ENCODE measurements at regions of chr17 and their contacts with region 1.

Region 1: GRCh38 chr17:28763804-28764266 is 20.0 kb downstream of the TRAF4 start:
- DNase-seq: peak in 1 of 2 experiments; percentile 84
- H3K4me3 ChIP-seq: no peak overlapping the region
- H3K27ac ChIP-seq: no peak overlapping the region
- H3K4me1 ChIP-seq: peaks cover 9 to 25% (median 18%) of the 10 kb centered on the region in 4 experiments
- H3K27me3 ChIP-seq: no peaks in the 10 kb centered on the region
- CTCF ChIP-seq: peak in 2 of 3 experiments; percentile 62 to 81; a peak in 3 of 4 replicates
- EP300 ChIP-seq: no peak
- POLR2A ChIP-seq: no peak
- RAD21 ChIP-seq: peak; percentile 63 to 72

Region 2: GRCh38 chr17:28726226-28727130 is 37.4 kb before region 1 on chr17 and contains the start of gene TLCD1:
- CTCF ChIA-PET with region 1: interaction called, 83 read pairs
- POLR2A ChIA-PET with region 1: interaction called, 62 read pairs
- DNase-seq: peak; percentile 93 to 98
- H3K4me3 ChIP-seq: peak within 1 kb of the TSS; percentile 81 to 97 (median 89)
- H3K27ac ChIP-seq: peak within 1 kb of the TSS; percentile 89
- H3K4me1 ChIP-seq: peaks cover 0 to 12% (median 5%) of the 10 kb centered on the region in 4 experiments; a peak in 6 of 7 replicates
- H3K27me3 ChIP-seq: no peaks in the 10 kb centered on the region
- CTCF ChIP-seq: peak; percentile 98 to 99 (median 99)
- EP300 ChIP-seq: peak in 1 of 2 experiments; percentile 70; a peak in 1 of 3 replicates
- POLR2A ChIP-seq: no peak; a peak in 2 of 3 replicates
- RAD21 ChIP-seq: peak; percentile 98 to 99
- total RNA-seq, gene TLCD1: 40.7 and 45.3 TPM in 2 replicates

Region 3: DNA sequence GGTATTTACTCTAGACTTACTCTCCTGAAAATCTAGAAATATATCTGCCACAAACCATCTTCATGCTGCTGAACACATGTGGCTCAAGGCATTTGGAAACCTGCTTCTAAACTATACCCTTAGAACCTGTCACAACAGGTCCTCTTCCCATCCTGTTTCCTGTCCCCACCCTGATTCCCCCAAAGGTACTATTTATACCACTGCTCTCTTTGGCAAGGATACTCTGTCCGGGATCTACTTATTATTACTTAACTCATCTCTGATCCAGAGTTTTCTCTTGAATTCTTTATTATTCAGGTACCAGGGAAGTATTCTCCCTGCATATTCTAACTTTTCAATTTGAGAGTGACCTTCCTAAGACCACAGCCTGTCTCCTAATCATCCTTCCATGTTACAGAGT is 13.3 kb after region 1 on chr17:
- CTCF ChIA-PET with region 1: interaction called, 76 read pairs
- POLR2A ChIA-PET with region 1: interaction called, 13 read pairs
- DNase-seq: no peak
- H3K4me3 ChIP-seq: no peak overlapping the region
- H3K27ac ChIP-seq: no peak overlapping the region
- H3K4me1 ChIP-seq: peaks cover 0 to 3% (median 0%) of the 10 kb centered on the region in 4 experiments; a peak in 1 of 7 replicates
- H3K27me3 ChIP-seq: no peaks in the 10 kb centered on the region
- CTCF ChIP-seq: no peak
- EP300 ChIP-seq: no peak
- POLR2A ChIP-seq: no peak
- RAD21 ChIP-seq: no peak

Region 4: GRCh38 chr17:28812091-28812747 is 48.4 kb after region 1 on chr17:
- CTCF ChIA-PET with region 1: interaction called, 26 read pairs
- POLR2A ChIA-PET with region 1: interaction called, 13 read pairs
- DNase-seq: peak; percentile 96
- H3K4me3 ChIP-seq: peak overlapping the region; percentile 79 to 92 (median 86)
- H3K27ac ChIP-seq: peak overlapping the region; percentile 90
- H3K4me1 ChIP-seq: peaks cover 3 to 10% (median 7%) of the 10 kb centered on the region in 4 experiments; a peak in 6 of 7 replicates
- H3K27me3 ChIP-seq: no peaks in the 10 kb centered on the region
- CTCF ChIP-seq: no peak
- EP300 ChIP-seq: peak in 1 of 2 experiments; percentile 35; a peak in 1 of 3 replicates
- POLR2A ChIP-seq: peak in 1 of 2 experiments; percentile 79; a peak in 2 of 3 replicates
- RAD21 ChIP-seq: peak in 1 of 2 experiments; percentile 13; a peak in 1 of 4 replicates

Region 5: GRCh38 chr17:28849281-28849680 is 85.4 kb after region 1 on chr17:
- CTCF ChIA-PET with region 1: interaction called, 34 read pairs
- POLR2A ChIA-PET with region 1: interaction called, 3 read pairs
- DNase-seq: no peak
- H3K4me3 ChIP-seq: no peak overlapping the region
- H3K27ac ChIP-seq: no peak overlapping the region
- H3K4me1 ChIP-seq: no peaks in the 10 kb centered on the region; a peak in 1 of 7 replicates
- H3K27me3 ChIP-seq: no peaks in the 10 kb centered on the region
- CTCF ChIP-seq: peak; percentile 1 to 36 (median 26); a peak in 3 of 4 replicates
- EP300 ChIP-seq: no peak
- POLR2A ChIP-seq: no peak
- RAD21 ChIP-seq: peak; percentile 31 to 37

Region 6: GRCh38 chr17:28878981-28879380 is 115.1 kb after region 1 on chr17:
- CTCF ChIA-PET with region 1: interaction called, 73 read pairs
- POLR2A ChIA-PET with region 1: interaction called, 5 read pairs
- DNase-seq: peak; percentile 67 to 75
- H3K4me3 ChIP-seq: no peak overlapping the region
- H3K27ac ChIP-seq: no peak overlapping the region
- H3K4me1 ChIP-seq: no peaks in the 10 kb centered on the region; a peak in 3 of 7 replicates
- H3K27me3 ChIP-seq: no peaks in the 10 kb centered on the region; a peak in 1 of 7 replicates
- CTCF ChIP-seq: peak; percentile 81 to 96 (median 85)
- EP300 ChIP-seq: no peak
- POLR2A ChIP-seq: no peak
- RAD21 ChIP-seq: peak; percentile 90 to 94

Region 7: GRCh38 chr17:28902819-28903545 is 139.1 kb after region 1 on chr17 and contains the start of gene DHRS13:
- CTCF ChIA-PET with region 1: interaction called, 47 read pairs
- POLR2A ChIA-PET with region 1: interaction called, 15 read pairs
- DNase-seq: peak; percentile 87 to 97
- H3K4me3 ChIP-seq: peak within 1 kb of the TSS; percentile 52 to 85 (median 72)
- H3K27ac ChIP-seq: peak within 1 kb of the TSS; percentile 54
- H3K4me1 ChIP-seq: peaks cover 0 to 9% (median 5%) of the 10 kb centered on the region in 4 experiments; a peak in 5 of 7 replicates
- H3K27me3 ChIP-seq: no peaks in the 10 kb centered on the region
- CTCF ChIP-seq: peak; percentile 76 to 100 (median 99)
- EP300 ChIP-seq: peak in 1 of 2 experiments; percentile 65; a peak in 1 of 3 replicates
- POLR2A ChIP-seq: no peak
- RAD21 ChIP-seq: peak; percentile 23 to 64
- total RNA-seq, gene DHRS13: 22.1 and 23.7 TPM in 2 replicates

Measured in H1 (cell line).